ENCODE measurements at regions of chr10 and their contacts with region 1.

Region 1: DNA sequence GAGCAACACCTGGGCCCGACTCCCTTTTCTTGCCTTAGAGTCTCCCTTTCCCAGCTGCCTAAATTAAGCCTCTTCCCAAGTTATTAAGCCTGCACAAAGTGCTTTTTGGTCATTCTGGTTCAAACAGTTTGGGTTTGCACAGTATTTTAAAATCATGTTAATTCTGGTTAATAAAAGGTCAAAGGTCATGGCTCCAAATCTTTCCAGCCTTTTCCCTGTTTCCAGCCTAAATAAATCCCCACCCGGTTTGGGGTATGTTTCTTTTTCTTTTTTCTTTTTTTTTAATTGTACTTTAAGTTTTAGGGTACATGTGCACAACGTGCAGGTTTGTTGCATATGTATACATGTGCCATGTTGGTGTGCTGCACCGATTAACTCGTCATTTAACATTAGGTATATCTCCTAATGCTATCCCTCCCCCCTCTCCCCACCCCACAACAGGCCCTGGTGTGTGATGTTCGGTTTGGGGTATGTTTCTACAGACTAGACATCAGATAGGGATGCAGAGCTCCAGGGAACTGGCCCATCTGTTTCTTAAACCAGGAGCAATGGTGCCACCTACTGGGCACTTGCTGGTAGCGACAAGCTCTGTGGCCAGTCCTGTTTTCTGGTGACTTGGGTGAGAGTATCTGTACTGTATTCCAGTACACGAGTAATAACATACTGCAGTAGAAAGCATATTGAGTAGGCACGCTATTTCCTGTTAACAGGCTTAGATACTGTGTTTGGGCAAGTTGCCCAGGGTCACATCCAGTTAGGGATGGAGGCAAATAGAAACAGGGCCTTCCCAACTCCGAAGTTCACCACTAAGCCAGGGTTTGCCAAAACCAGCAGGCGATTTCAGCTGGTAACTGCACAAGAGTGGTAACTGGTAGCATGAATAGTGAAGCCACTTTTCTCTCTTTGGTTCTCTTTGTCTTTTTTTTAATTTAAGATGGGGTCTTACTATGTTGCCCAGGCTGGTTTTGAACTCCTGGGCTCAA is 60.6 kb upstream of the TRIM8 start:
- DNase-seq: peak; percentile 91
- ATAC-seq: peak; percentile 92
- H3K4me3 Mint-ChIP-seq: no peak overlapping the region
- H3K27ac Mint-ChIP-seq: no peak overlapping the region
- H3K4me1 Mint-ChIP-seq: peaks cover 21% of the 10 kb centered on the region
- H3K27me3 Mint-ChIP-seq: no peaks in the 10 kb centered on the region; the same call in 1 of the 2 replicates
- CTCF ChIP-seq: peak; percentile 83

Region 2: DNA sequence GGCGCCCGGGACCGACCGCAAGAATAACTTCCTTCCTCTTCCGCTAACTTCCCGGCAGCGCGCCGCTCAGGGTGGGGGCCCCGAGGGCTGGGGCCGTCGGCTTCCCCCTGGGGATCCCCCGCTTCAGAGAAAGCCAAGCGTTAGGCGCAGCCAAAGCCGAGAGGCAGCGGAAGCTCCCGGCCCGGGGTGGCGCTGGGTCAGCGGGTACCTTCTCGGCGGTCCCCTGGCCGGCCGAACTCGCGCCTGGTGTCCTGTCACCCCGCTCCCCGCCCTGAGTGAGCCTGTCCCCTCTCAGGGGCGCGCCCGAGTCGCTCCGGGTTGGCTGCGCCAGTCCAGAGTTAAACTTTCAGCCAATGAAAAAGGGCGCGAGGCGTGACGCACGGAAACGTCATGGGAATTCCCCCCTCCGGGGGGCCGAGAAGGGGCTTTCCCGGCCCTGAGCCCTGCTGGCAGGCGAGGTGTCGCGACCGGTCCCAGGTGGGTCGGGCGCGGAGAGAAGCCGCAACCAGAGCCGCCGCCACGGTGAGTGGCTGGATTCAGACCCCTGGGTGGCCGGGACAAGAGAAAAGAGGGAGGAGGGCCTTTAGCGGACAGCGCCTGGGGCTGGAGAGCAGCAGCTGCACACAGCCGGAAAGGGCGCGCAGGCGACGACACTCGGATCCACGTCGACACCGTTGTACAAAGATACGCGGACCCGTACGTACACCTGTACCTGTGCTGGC is 189.5 kb before region 1 on chr10:
- CTCF ChIA-PET with region 1: interaction called, 18 read pairs
- POLR2A ChIA-PET with region 1: no interaction called
- DNase-seq: peak; percentile 93
- ATAC-seq: peak; percentile 81
- H3K4me3 Mint-ChIP-seq: peak overlapping the region; percentile 75
- H3K27ac Mint-ChIP-seq: peak overlapping the region; percentile 12; the same call in 1 of the 2 replicates
- H3K4me1 Mint-ChIP-seq: peaks cover 18% of the 10 kb centered on the region
- H3K27me3 Mint-ChIP-seq: peaks cover 41% of the 10 kb centered on the region
- CTCF ChIP-seq: no peak; the same call in none of the 2 replicates

Region 3: GRCh38 chr10:102461187-102462054 is 122.3 kb before region 1 on chr10:
- CTCF ChIA-PET with region 1: interaction called, 15 read pairs
- POLR2A ChIA-PET with region 1: no interaction called
- DNase-seq: peak; percentile 98
- ATAC-seq: peak; percentile 84
- H3K4me3 Mint-ChIP-seq: peak overlapping the region; percentile 97
- H3K27ac Mint-ChIP-seq: peak overlapping the region; percentile 90
- H3K4me1 Mint-ChIP-seq: peaks cover 35% of the 10 kb centered on the region
- H3K27me3 Mint-ChIP-seq: peaks cover 2% of the 10 kb centered on the region; the same call in 1 of the 2 replicates
- CTCF ChIP-seq: no peak

Region 4: GRCh38 chr10:102517553-102517952 is 66.2 kb before region 1 on chr10:
- CTCF ChIA-PET with region 1: interaction called, 20 read pairs
- POLR2A ChIA-PET with region 1: no interaction called
- DNase-seq: no peak
- ATAC-seq: no peak
- H3K4me3 Mint-ChIP-seq: no peak overlapping the region
- H3K27ac Mint-ChIP-seq: peak overlapping the region; percentile 67; the same call in 1 of the 2 replicates
- H3K4me1 Mint-ChIP-seq: no peaks in the 10 kb centered on the region
- H3K27me3 Mint-ChIP-seq: no peaks in the 10 kb centered on the region
- CTCF ChIP-seq: no peak

Region 5: DNA sequence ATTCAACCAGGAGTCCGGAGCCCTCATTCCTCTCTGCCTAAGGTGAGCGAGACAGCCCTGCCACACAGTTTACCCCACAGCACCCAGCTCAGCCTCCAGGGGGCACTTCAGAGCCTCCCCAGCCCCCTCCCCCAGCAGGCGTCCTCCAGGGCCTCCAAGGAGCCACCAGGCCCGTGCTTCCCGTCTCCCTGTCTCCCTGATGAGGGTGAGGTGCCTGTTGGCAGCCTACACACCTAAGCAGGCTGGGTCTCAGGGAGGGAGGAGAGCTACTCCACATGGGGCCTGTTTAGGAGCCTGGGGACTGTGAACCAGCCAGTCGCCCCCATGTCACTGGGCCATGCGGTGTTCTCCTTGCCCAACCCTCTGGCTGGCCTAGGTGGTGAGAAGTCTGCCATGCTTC is 31.6 kb after region 1 on chr10:
- CTCF ChIA-PET with region 1: interaction called, 16 read pairs
- POLR2A ChIA-PET with region 1: no interaction called
- DNase-seq: peak; percentile 77
- ATAC-seq: peak; percentile 86
- H3K4me3 Mint-ChIP-seq: no peak overlapping the region
- H3K27ac Mint-ChIP-seq: no peak overlapping the region
- H3K4me1 Mint-ChIP-seq: peaks cover 8% of the 10 kb centered on the region
- H3K27me3 Mint-ChIP-seq: no peaks in the 10 kb centered on the region
- CTCF ChIP-seq: peak; percentile 43

Region 6: GRCh38 chr10:102776779-102777456 is 193.2 kb after region 1 on chr10:
- CTCF ChIA-PET with region 1: no interaction called
- POLR2A ChIA-PET with region 1: no interaction called
- DNase-seq: peak; percentile 66
- ATAC-seq: peak; percentile 66
- H3K4me3 Mint-ChIP-seq: peak overlapping the region; percentile 41
- H3K27ac Mint-ChIP-seq: peak overlapping the region; percentile 32
- H3K4me1 Mint-ChIP-seq: peaks cover 70% of the 10 kb centered on the region
- H3K27me3 Mint-ChIP-seq: no peaks in the 10 kb centered on the region
- CTCF ChIP-seq: no peak

Region 7: GRCh38 chr10:103069453-103070331 is 486.0 kb after region 1 on chr10:
- CTCF ChIA-PET with region 1: no interaction called
- POLR2A ChIA-PET with region 1: no interaction called
- DNase-seq: peak; percentile 80
- ATAC-seq: peak; percentile 89
- H3K4me3 Mint-ChIP-seq: no peak overlapping the region
- H3K27ac Mint-ChIP-seq: no peak overlapping the region
- H3K4me1 Mint-ChIP-seq: peaks cover 6% of the 10 kb centered on the region; the same call in 1 of the 2 replicates
- H3K27me3 Mint-ChIP-seq: no peaks in the 10 kb centered on the region
- CTCF ChIP-seq: peak; percentile 58